A673 (cell line): ENCODE measurements at regions of chr15 and their contacts with region 1.

Region 1: GRCh38 chr15:56105855-56106254 is 112.4 kb upstream of the NEDD4 start:
- DNase-seq: no peak
- H3K4me3 ChIP-seq: no peak overlapping the region
- H3K27ac ChIP-seq: no peak overlapping the region
- H3K4me1 ChIP-seq: no peaks in the 10 kb centered on the region
- H3K27me3 ChIP-seq: no peaks in the 10 kb centered on the region
- CTCF ChIP-seq: no peak

Region 2: GRCh38 chr15:55775316-55775715 is 330.5 kb before region 1 on chr15:
- CTCF ChIA-PET with region 1: no interaction called
- POLR2A ChIA-PET with region 1: no interaction called
- intact Hi-C with region 1: no loop called
- DNase-seq: peak; percentile 82
- H3K4me3 ChIP-seq: no peak overlapping the region
- H3K27ac ChIP-seq: no peak overlapping the region
- H3K4me1 ChIP-seq: peaks cover 12% of the 10 kb centered on the region
- H3K27me3 ChIP-seq: no peaks in the 10 kb centered on the region
- CTCF ChIP-seq: no peak

Region 3: DNA sequence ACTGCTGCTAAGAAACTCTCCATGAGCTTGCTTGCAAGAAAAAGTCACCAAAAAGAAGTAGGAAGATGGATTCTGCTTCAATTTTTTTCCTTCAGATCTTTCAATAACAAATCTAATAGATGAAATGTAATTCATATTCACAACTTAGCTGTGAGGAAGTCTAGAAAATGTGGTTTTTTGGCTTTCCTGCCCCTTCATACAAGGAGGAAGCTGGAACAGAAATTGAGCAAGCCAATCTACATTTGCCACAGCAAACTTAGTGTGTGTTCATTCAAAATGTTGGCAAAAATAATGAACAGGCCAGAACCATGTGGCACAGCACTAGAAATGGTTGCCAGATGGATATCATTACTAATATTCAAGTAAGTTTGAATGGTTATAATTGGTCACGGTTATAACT is 19.3 kb before region 1 on chr15:
- CTCF ChIA-PET with region 1: no interaction called
- POLR2A ChIA-PET with region 1: no interaction called
- intact Hi-C with region 1: loop called (anchors 2 kb)
- DNase-seq: no peak
- H3K4me3 ChIP-seq: no peak overlapping the region
- H3K27ac ChIP-seq: no peak overlapping the region
- H3K4me1 ChIP-seq: no peaks in the 10 kb centered on the region
- H3K27me3 ChIP-seq: no peaks in the 10 kb centered on the region
- CTCF ChIP-seq: no peak